B cell (primary cell): ENCODE measurements at regions of chr2 and their contacts with region 1.

Region 1: GRCh38 chr2:201231781-201232466 is 28.4 kb upstream of the CASP8 start:
- DNase-seq: peak; percentile 93
- ATAC-seq: peak; percentile 56
- H3K4me3 ChIP-seq: peak overlapping the region in 3 of 5 experiments; percentile 3 to 43 (median 25)
- H3K4me3 Mint-ChIP-seq: peak overlapping the region; percentile 94
- H3K27ac ChIP-seq: peak overlapping the region in 1 of 2 donors; percentile 24
- H3K27ac Mint-ChIP-seq: peak overlapping the region; percentile 84
- H3K4me1 ChIP-seq: peaks cover 41 to 49% of the 10 kb centered on the region in 2 donors
- H3K4me1 Mint-ChIP-seq: peaks cover 53% of the 10 kb centered on the region
- H3K27me3 ChIP-seq: no peaks in the 10 kb centered on the region
- H3K27me3 Mint-ChIP-seq: no peaks in the 10 kb centered on the region
- CTCF ChIP-seq: peak; percentile 97

Region 2: GRCh38 chr2:200963124-200963917 is 268.6 kb before region 1 on chr2 and contains the start of gene ORC2:
- CTCF ChIA-PET with region 1: interaction called, 32 read pairs
- POLR2A ChIA-PET with region 1: no interaction called
- intact Hi-C with region 1: loop called (anchors 2 kb)
- DNase-seq: peak; percentile 97
- ATAC-seq: peak; percentile 92
- H3K4me3 ChIP-seq: peak within 1 kb of the TSS; percentile 77 to 97 (median 90)
- H3K4me3 Mint-ChIP-seq: peak within 1 kb of the TSS; percentile 92
- H3K27ac ChIP-seq: peak within 1 kb of the TSS; percentile 90 to 92
- H3K27ac Mint-ChIP-seq: peak within 1 kb of the TSS; percentile 98
- H3K4me1 ChIP-seq: peaks cover 28 to 30% of the 10 kb centered on the region in 2 donors
- H3K4me1 Mint-ChIP-seq: peaks cover 53% of the 10 kb centered on the region
- H3K27me3 ChIP-seq: no peaks in the 10 kb centered on the region
- H3K27me3 Mint-ChIP-seq: no peaks in the 10 kb centered on the region
- CTCF ChIP-seq: peak; percentile 77
- total RNA-seq, gene ORC2: 50.6 and 63.6 TPM in 2 replicates

Region 3: GRCh38 chr2:201158111-201158929 is 73.6 kb before region 1 on chr2:
- CTCF ChIA-PET with region 1: interaction called, 30 read pairs
- POLR2A ChIA-PET with region 1: no interaction called
- intact Hi-C with region 1: no loop called
- DNase-seq: peak; percentile 95
- ATAC-seq: peak; percentile 91
- H3K4me3 ChIP-seq: peak overlapping the region in 1 of 5 experiments; percentile 9
- H3K4me3 Mint-ChIP-seq: peak overlapping the region; percentile 64
- H3K27ac ChIP-seq: peak overlapping the region; percentile 84 to 85
- H3K27ac Mint-ChIP-seq: peak overlapping the region; percentile 90
- H3K4me1 ChIP-seq: peaks cover 43 to 47% of the 10 kb centered on the region in 2 donors
- H3K4me1 Mint-ChIP-seq: peaks cover 52% of the 10 kb centered on the region
- H3K27me3 ChIP-seq: no peaks in the 10 kb centered on the region
- H3K27me3 Mint-ChIP-seq: no peaks in the 10 kb centered on the region
- CTCF ChIP-seq: peak; percentile 69

Region 4: DNA sequence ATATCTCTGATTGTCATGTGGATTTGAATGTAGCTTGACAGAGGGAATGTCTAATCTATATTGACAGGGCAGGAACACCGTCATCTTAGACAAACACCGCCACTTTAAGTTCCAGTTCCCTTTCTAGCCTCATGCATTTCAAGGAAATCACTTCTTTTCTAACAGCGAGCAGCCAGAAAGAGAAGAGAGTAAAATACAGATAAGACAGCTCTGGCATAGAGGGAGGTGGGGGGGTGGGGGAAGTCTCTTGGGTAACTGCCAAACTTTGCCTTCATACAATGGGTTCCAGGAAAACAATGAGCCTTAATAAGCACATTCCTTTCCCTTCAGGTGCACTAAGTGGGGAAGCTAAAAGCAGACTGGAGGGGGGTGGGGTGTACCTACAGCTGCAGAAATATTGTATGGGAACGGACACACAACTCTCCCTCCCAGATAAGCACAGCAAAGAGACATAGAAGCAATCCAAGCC is 11.8 kb before region 1 on chr2:
- CTCF ChIA-PET with region 1: interaction called, 54 read pairs
- POLR2A ChIA-PET with region 1: interaction called, 4 read pairs
- intact Hi-C with region 1: no loop called
- DNase-seq: peak; percentile 51
- ATAC-seq: peak; percentile 31
- H3K4me3 ChIP-seq: no peak overlapping the region
- H3K4me3 Mint-ChIP-seq: no peak overlapping the region
- H3K27ac ChIP-seq: peak overlapping the region in 1 of 2 donors; percentile 6
- H3K27ac Mint-ChIP-seq: peak overlapping the region; percentile 12
- H3K4me1 ChIP-seq: peaks cover 12 to 27% of the 10 kb centered on the region in 2 donors
- H3K4me1 Mint-ChIP-seq: peaks cover 38% of the 10 kb centered on the region
- H3K27me3 ChIP-seq: no peaks in the 10 kb centered on the region
- H3K27me3 Mint-ChIP-seq: no peaks in the 10 kb centered on the region
- CTCF ChIP-seq: no peak

Region 5: GRCh38 chr2:201270293-201271001 is 38.5 kb after region 1 on chr2:
- CTCF ChIA-PET with region 1: interaction called, 16 read pairs
- POLR2A ChIA-PET with region 1: no interaction called
- intact Hi-C with region 1: no loop called
- DNase-seq: no peak
- ATAC-seq: no peak
- H3K4me3 ChIP-seq: no peak overlapping the region
- H3K4me3 Mint-ChIP-seq: no peak overlapping the region
- H3K27ac ChIP-seq: no peak overlapping the region
- H3K27ac Mint-ChIP-seq: peak overlapping the region; percentile 46
- H3K4me1 ChIP-seq: peaks cover 2 to 3% of the 10 kb centered on the region in 2 donors
- H3K4me1 Mint-ChIP-seq: peaks cover 38% of the 10 kb centered on the region
- H3K27me3 ChIP-seq: no peaks in the 10 kb centered on the region
- H3K27me3 Mint-ChIP-seq: no peaks in the 10 kb centered on the region
- CTCF ChIP-seq: no peak

Region 6: GRCh38 chr2:201298462-201299052 is 66.6 kb after region 1 on chr2:
- CTCF ChIA-PET with region 1: no interaction called
- POLR2A ChIA-PET with region 1: no interaction called
- intact Hi-C with region 1: no loop called
- DNase-seq: no peak
- ATAC-seq: no peak
- H3K4me3 ChIP-seq: no peak overlapping the region
- H3K4me3 Mint-ChIP-seq: no peak overlapping the region
- H3K27ac ChIP-seq: no peak overlapping the region
- H3K27ac Mint-ChIP-seq: no peak overlapping the region
- H3K4me1 ChIP-seq: no peaks in the 10 kb centered on the region
- H3K4me1 Mint-ChIP-seq: no peaks in the 10 kb centered on the region
- H3K27me3 ChIP-seq: no peaks in the 10 kb centered on the region
- H3K27me3 Mint-ChIP-seq: no peaks in the 10 kb centered on the region
- CTCF ChIP-seq: no peak

Region 7: DNA sequence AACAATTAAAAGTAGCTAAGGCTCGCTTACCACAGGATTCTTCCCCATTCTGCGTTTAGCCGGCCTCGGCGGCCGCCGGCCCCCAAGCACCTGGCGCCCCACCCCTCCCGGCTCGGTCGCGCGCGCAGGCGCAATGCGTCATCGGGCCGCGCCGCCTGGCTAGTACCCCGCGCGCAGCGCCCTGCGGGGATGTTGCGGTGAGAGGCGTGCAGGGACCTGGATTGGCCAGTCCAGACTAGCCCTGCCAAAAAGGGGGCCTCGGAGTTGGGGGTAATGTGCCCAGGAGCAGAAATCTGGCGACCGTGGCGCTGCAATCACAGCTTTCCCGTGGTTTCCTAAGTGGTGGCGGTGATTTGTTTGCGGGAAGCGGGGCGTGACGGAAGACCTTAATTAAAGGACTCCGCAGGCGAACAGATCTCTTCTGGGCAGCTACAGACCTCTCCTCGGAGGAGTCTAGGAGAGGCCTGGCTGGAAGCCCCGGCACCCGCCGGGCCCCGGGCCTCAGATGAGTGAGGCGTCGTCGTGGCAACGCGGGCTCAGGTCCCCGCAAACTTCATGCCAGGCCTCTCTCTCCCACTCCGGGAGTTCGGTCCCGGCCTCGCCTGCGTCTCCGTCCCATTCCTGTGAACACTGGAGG is 410.8 kb after region 1 on chr2:
- CTCF ChIA-PET with region 1: interaction called, 3 read pairs
- POLR2A ChIA-PET with region 1: interaction called, 5 read pairs
- intact Hi-C with region 1: loop called (anchors 2 kb)
- DNase-seq: peak; percentile 92
- ATAC-seq: peak; percentile 86
- H3K4me3 ChIP-seq: peak overlapping the region; percentile 73 to 100 (median 95)
- H3K4me3 Mint-ChIP-seq: peak overlapping the region; percentile 96
- H3K27ac ChIP-seq: peak overlapping the region; percentile 89 to 93
- H3K27ac Mint-ChIP-seq: peak overlapping the region; percentile 97
- H3K4me1 ChIP-seq: peaks cover 10 to 14% of the 10 kb centered on the region in 2 donors
- H3K4me1 Mint-ChIP-seq: peaks cover 12% of the 10 kb centered on the region
- H3K27me3 ChIP-seq: peaks cover 0 to 2% (median 0%) of the 10 kb centered on the region in 4 experiments
- H3K27me3 Mint-ChIP-seq: peaks cover 7% of the 10 kb centered on the region
- CTCF ChIP-seq: no peak